ENCODE measurements at regions of chr13 and their contacts with region 1.

Region 1: GRCh38 chr13:99176309-99177276 is 24.1 kb upstream of the UBAC2 start:
- DNase-seq: no peak
- H3K4me3 ChIP-seq: no peak overlapping the region
- H3K27ac ChIP-seq: no peak overlapping the region
- H3K4me1 ChIP-seq: peaks cover 14% of the 10 kb centered on the region
- H3K27me3 ChIP-seq: no peaks in the 10 kb centered on the region
- CTCF ChIP-seq: peak; percentile 96 to 98 (median 97)

Region 2: GRCh38 chr13:98866882-98867281 is 309.7 kb before region 1 on chr13:
- dilution Hi-C with region 1: no loop called
- DNase-seq: no peak
- H3K4me3 ChIP-seq: no peak overlapping the region
- H3K27ac ChIP-seq: no peak overlapping the region
- H3K4me1 ChIP-seq: no peaks in the 10 kb centered on the region
- H3K27me3 ChIP-seq: no peaks in the 10 kb centered on the region
- CTCF ChIP-seq: no peak

Region 3: GRCh38 chr13:99062593-99062992 is 114.0 kb before region 1 on chr13:
- dilution Hi-C with region 1: no loop called
- DNase-seq: no peak
- H3K4me3 ChIP-seq: peak overlapping the region in 2 of 3 experiments; percentile 8 to 47
- H3K27ac ChIP-seq: peak overlapping the region; percentile 55
- H3K4me1 ChIP-seq: peaks cover 65% of the 10 kb centered on the region
- H3K27me3 ChIP-seq: no peaks in the 10 kb centered on the region
- CTCF ChIP-seq: no peak

Region 4: GRCh38 chr13:99269627-99270241 is 93.1 kb after region 1 on chr13:
- dilution Hi-C with region 1: loop called (anchors 10 kb)
- DNase-seq: no peak
- H3K4me3 ChIP-seq: no peak overlapping the region
- H3K27ac ChIP-seq: no peak overlapping the region
- H3K4me1 ChIP-seq: no peaks in the 10 kb centered on the region
- H3K27me3 ChIP-seq: no peaks in the 10 kb centered on the region
- CTCF ChIP-seq: peak in 2 of 3 experiments; percentile 32 to 46

Measured in keratinocyte (primary cell).